Activated B cell treated with CpG ODN at 0.5 μM for 24 hours (primary cell): ENCODE measurements at regions of chr13 and their contacts with region 1.

Region 1: GRCh38 chr13:79336966-79337365 is 69.1 kb downstream of the RBM26 start:
- DNase-seq: no peak
- ATAC-seq: peak; percentile 69
- H3K4me3 Mint-ChIP-seq: peak overlapping the region; percentile 8
- H3K27ac Mint-ChIP-seq: peak overlapping the region; percentile 59
- H3K4me1 Mint-ChIP-seq: peaks cover 11% of the 10 kb centered on the region
- H3K27me3 Mint-ChIP-seq: no peaks in the 10 kb centered on the region
- CTCF ChIP-seq: no peak

Region 2: DNA sequence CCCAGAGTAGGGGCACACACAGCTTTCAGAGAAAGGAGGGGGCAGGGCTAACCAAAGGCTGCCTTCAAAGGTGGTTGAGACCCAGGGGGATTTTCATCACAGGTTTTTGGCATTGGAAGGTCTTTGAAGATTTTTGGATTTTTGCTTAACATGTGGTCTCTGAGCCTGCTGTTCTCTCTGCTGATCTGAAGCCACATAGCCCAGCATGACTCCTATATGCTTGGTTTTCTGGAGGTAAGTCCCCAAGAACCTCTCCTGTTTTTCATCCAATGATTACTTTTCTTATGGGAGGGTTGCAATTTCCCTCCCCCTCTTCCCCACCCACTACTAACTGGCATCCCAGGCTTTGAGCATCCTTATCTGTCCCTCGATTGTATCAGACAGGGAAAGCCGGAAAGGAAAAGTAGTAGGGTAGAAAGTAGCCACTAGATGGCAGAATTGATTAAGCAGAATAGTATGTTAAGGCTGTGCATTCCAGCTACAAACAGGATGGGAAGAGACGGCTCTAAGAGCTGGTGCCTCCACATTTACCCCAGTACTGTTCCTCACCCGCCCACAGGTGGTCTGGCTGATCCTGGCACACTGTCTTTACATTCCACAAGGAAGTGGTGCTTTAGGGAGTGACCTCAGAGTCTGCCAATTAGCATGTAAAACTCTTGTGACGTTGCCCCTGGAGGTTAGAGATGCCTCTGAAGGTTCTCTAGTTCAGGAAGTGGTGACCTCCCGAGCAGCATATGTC is 1199.4 kb before region 1 on chr13:
- CTCF ChIA-PET with region 1: no interaction called
- POLR2A ChIA-PET with region 1: no interaction called
- intact Hi-C with region 1: loop called (anchors 1 kb)
- DNase-seq: peak; percentile 18
- ATAC-seq: peak; percentile 71
- H3K4me3 Mint-ChIP-seq: peak overlapping the region; percentile 79
- H3K27ac Mint-ChIP-seq: no peak overlapping the region
- H3K4me1 Mint-ChIP-seq: peaks cover 5% of the 10 kb centered on the region
- H3K27me3 Mint-ChIP-seq: peaks cover 5% of the 10 kb centered on the region
- CTCF ChIP-seq: no peak

Region 3: GRCh38 chr13:78881751-78882150 is 455.2 kb before region 1 on chr13:
- CTCF ChIA-PET with region 1: no interaction called
- POLR2A ChIA-PET with region 1: no interaction called
- intact Hi-C with region 1: no loop called
- DNase-seq: no peak
- ATAC-seq: no peak
- H3K4me3 Mint-ChIP-seq: no peak overlapping the region
- H3K27ac Mint-ChIP-seq: no peak overlapping the region
- H3K4me1 Mint-ChIP-seq: no peaks in the 10 kb centered on the region
- H3K27me3 Mint-ChIP-seq: peaks cover 1% of the 10 kb centered on the region
- CTCF ChIP-seq: no peak

Region 4: DNA sequence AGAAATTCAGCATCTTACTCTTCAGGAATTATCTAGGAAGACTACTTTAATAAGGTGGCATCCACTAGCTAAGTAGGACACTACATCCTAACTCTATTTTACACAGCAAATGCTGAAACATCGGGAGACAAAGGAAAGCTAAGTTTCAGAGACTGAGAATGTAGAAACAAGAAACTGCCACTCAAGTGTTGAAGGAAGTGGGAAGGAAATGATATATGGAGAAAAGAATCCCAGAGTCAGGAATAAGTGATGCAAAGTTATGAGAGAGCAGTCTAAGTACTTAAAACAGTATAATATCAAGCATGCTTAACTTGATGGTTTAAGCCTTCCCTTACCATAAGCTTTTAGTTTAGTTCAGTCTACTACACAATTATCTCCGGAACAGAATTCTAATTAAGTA is 16.7 kb after region 1 on chr13:
- CTCF ChIA-PET with region 1: no interaction called
- POLR2A ChIA-PET with region 1: no interaction called
- intact Hi-C with region 1: loop called (anchors 2 kb)
- DNase-seq: no peak
- ATAC-seq: no peak
- H3K4me3 Mint-ChIP-seq: no peak overlapping the region
- H3K27ac Mint-ChIP-seq: no peak overlapping the region
- H3K4me1 Mint-ChIP-seq: no peaks in the 10 kb centered on the region
- H3K27me3 Mint-ChIP-seq: no peaks in the 10 kb centered on the region
- CTCF ChIP-seq: no peak

Region 5: GRCh38 chr13:79385694-79386093 is 48.7 kb after region 1 on chr13:
- CTCF ChIA-PET with region 1: no interaction called
- POLR2A ChIA-PET with region 1: no interaction called
- intact Hi-C with region 1: loop called (anchors 10 kb)
- DNase-seq: no peak
- ATAC-seq: peak; percentile 76
- H3K4me3 Mint-ChIP-seq: no peak overlapping the region
- H3K27ac Mint-ChIP-seq: no peak overlapping the region
- H3K4me1 Mint-ChIP-seq: peaks cover 80% of the 10 kb centered on the region
- H3K27me3 Mint-ChIP-seq: no peaks in the 10 kb centered on the region
- CTCF ChIP-seq: no peak